Dorsolateral prefrontal cortex (tissue), 120 donors: ENCODE measurements at regions of chr10 and their contacts with region 1.

Region 1: GRCh38 chr10:103192451-103193106 is 493 bp downstream of the NT5C2 start:
- DNase-seq: peak; percentile 40 to 72 (median 66)
- H3K4me3 ChIP-seq: peak overlapping the region; percentile 61 to 98 (median 87)
- H3K27ac ChIP-seq: peak overlapping the region; percentile 75 to 98 (median 95)
- H3K27me3 ChIP-seq: no peaks in the 10 kb centered on the region
- CTCF ChIP-seq: peak in 2 of 56 donors; percentile 4 to 22

Region 2: GRCh38 chr10:102523250-102524029 is 669.1 kb before region 1 on chr10:
- intact Hi-C with region 1: no loop called
- DNase-seq: no peak
- H3K4me3 ChIP-seq: no peak overlapping the region
- H3K27ac ChIP-seq: peak overlapping the region in 1 of 59 donors; percentile 9
- H3K27me3 ChIP-seq: no peaks in the 10 kb centered on the region
- CTCF ChIP-seq: no peak

Region 3: DNA sequence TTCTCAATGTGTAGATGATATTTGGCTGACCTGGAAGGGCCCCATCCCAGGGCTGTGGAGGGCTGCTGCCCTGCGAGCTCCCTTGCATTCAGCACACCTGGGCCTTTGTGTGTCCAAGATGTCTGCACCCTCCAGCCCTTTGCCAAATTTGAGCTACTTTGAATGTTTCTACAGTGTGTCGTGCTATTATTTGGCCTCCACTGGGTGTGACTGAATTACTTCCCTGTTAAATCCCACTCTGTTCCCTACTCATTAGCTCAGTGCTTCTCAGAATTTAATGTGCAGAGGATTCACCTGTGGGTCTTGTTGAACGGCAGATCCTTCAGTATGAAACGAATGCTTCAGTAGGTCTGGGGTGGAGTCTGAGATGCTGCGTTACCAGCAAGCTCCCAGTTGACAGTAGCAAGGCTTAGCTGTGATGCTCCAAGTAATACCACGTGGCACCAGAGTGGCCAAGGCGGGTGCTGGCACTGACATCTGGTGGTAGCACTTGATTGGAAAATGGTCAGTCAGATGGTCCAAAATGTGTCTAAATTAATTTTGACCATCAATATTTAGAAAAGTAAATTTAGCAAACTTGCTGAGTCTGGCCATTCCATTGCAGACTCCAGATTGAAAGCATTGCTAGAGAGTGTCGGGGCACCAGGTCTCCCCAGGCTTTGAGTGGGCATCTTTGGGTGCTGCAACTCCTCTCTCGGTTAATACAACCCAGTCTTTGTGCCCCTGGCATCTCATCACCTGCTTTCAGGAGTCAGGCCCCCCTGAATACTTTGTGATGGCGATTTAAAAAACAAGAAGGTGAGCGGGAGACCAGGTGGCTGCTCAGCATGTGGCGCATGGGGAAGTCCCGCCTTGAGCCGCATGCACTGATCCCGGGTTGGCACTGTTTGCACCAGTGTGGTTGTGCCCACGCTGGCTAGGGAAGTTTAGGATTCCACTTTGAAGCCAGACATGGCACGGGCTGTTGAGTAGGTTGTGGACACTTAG is 129.7 kb before region 1 on chr10:
- intact Hi-C with region 1: loop called in 1 of 2 experiments (anchors 5 kb)
- DNase-seq: peak in 8 of 10 donors; percentile 30 to 79 (median 65)
- H3K4me3 ChIP-seq: no peak overlapping the region
- H3K27ac ChIP-seq: peak overlapping the region in 3 of 59 donors; percentile 12 to 29 (median 19)
- H3K27me3 ChIP-seq: no peaks in the 10 kb centered on the region
- CTCF ChIP-seq: peak in 54 of 56 donors; percentile 13 to 80 (median 57)

Region 4: GRCh38 chr10:103102195-103102594 is 90.4 kb before region 1 on chr10:
- intact Hi-C with region 1: loop called in 1 of 2 experiments (anchors 5 kb)
- DNase-seq: peak in 1 of 10 donors; percentile 29
- H3K4me3 ChIP-seq: peak overlapping the region in 5 of 59 donors; percentile 1 to 21 (median 18)
- H3K27ac ChIP-seq: peak overlapping the region in 46 of 59 donors; percentile 2 to 94 (median 38)
- H3K27me3 ChIP-seq: no peaks in the 10 kb centered on the region
- CTCF ChIP-seq: no peak

Region 5: GRCh38 chr10:103145860-103146466 is 46.6 kb before region 1 on chr10:
- intact Hi-C with region 1: loop called in 1 of 2 experiments (anchors 5 kb)
- DNase-seq: no peak
- H3K4me3 ChIP-seq: no peak overlapping the region
- H3K27ac ChIP-seq: peak overlapping the region in 1 of 59 donors; percentile 2
- H3K27me3 ChIP-seq: no peaks in the 10 kb centered on the region
- CTCF ChIP-seq: no peak

Region 6: DNA sequence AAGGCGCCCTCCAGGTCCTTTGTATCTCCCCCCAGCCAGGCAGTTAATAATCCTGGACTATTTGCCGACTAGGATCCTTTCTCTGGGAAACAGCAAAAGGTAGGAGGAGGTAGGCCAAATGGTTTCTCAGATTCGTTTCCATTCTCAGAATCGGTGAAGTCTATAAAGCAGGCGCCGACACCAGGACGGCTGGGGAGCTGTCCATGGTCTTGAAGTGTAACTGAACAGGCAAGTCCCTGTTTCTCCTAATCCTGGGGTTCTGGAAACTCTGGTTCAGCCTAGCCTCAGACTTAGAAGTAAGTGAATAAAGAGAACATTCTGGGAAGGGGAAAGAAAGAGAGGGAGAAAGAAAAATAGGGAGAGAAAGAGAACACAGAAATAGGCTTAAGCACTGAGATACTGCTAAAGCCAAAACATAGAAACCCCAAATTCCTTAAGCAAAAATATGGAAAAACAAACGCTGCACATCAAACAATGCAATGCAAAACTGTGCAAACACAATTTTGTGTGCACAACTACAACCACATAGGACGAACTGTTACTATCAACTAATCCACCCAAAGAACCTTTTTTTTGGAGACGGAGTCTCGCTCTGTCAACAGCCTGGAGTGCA is 73.2 kb after region 1 on chr10:
- intact Hi-C with region 1: no loop called
- DNase-seq: peak in 1 of 10 donors; percentile 42
- H3K4me3 ChIP-seq: no peak overlapping the region
- H3K27ac ChIP-seq: no peak overlapping the region
- H3K27me3 ChIP-seq: peaks cover 0 to 5% (median 0%) of the 10 kb centered on the region in 45 donors
- CTCF ChIP-seq: no peak

Region 7: GRCh38 chr10:103281753-103282152 is 89.2 kb after region 1 on chr10:
- intact Hi-C with region 1: loop called in 1 of 2 experiments (anchors 2 kb)
- DNase-seq: peak in 9 of 10 donors; percentile 34 to 80 (median 71)
- H3K4me3 ChIP-seq: peak overlapping the region in 55 of 59 donors; percentile 7 to 72 (median 46)
- H3K27ac ChIP-seq: peak overlapping the region in 47 of 59 donors; percentile 6 to 82 (median 61)
- H3K27me3 ChIP-seq: peaks cover 0 to 50% (median 17%) of the 10 kb centered on the region in 45 donors
- CTCF ChIP-seq: no peak

Region 8: DNA sequence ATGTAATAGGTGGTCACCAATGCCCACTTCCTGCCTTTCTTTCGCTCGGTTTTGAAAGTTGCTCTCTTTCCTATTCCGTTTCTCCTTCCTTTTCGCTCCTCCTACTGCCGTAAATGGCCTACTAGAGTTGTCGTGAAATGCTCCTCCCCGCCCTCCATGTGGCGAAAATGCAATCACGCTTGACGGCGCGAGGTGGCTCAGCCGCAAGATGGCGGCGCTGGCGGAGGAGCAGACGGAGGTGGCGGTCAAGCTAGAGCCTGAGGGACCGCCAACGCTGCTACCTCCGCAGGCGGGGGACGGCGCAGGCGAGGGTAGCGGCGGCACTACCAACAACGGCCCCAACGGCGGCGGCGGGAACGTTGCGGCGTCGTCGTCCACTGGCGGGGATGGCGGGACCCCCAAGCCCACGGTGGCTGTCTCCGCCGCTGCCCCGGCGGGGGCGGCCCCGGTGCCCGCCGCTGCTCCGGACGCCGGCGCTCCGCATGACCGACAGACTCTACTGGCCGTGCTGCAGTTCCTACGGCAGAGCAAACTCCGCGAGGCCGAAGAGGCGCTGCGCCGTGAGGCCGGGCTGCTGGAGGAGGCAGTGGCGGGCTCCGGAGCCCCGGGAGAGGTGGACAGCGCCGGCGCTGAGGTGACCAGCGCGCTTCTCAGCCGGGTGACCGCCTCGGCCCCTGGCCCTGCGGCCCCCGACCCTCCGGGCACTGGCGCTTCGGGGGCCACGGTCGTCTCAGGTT is 175.4 kb after region 1 on chr10 and contains the start of gene TAF5:
- intact Hi-C with region 1: no loop called
- DNase-seq: peak; percentile 79 to 94 (median 90)
- H3K4me3 ChIP-seq: peak within 1 kb of the TSS; percentile 67 to 100 (median 96)
- H3K27ac ChIP-seq: peak within 1 kb of the TSS; percentile 32 to 97 (median 90)
- H3K27me3 ChIP-seq: no peaks in the 10 kb centered on the region
- CTCF ChIP-seq: peak in 49 of 56 donors; percentile 13 to 67 (median 37)
- total RNA-seq, gene TAF5: 3.0 to 7.1 (median 4.9) TPM